ENCODE measurements at regions of chr14 and their contacts with region 1.

Region 1: DNA sequence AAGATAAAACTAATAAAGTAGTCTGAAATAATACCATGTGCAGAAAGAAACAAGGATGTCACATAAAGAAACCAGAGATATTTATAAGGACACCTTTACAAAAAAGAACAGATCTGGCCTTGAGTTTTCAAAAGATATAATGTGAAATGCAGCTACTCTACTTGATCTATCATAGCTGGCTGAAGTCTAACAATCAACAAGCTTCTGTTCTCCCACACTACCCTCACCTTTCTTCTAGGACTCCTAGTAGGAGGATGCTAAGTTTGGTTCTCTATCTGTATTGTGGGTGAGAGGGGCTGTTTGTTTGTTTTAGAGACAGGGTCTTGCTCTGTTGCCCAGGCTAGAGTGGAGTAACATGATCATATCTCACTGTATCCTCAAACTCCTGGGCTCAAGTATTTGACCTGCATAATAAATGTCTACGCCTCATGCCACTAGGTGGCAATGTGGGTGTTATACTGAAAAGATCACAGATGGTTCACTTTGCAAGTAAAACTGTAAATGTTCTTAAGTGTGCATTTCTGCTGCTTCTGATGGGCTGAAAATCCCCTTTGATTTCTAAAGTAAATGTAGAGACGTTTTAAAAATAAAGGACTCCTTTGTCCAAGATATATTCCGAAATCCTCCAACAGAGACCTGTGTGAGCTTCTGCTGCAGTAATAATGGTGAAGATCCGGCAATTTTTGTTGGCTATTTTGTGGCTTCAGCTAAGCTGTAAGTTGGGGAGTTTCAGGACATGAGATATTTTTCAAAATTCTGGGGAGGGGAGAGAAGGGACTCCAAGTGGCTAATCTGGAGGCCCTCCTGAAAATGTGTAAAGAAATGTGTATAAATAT is 269.3 kb downstream of the DAD1 start:
- DNase-seq: peak; percentile 71
- H3K4me3 Mint-ChIP-seq: no peak overlapping the region
- H3K27ac Mint-ChIP-seq: no peak overlapping the region
- H3K4me1 Mint-ChIP-seq: peaks cover 12% of the 10 kb centered on the region
- H3K27me3 Mint-ChIP-seq: no peaks in the 10 kb centered on the region
- CTCF ChIP-seq: peak; percentile 35

Region 2: DNA sequence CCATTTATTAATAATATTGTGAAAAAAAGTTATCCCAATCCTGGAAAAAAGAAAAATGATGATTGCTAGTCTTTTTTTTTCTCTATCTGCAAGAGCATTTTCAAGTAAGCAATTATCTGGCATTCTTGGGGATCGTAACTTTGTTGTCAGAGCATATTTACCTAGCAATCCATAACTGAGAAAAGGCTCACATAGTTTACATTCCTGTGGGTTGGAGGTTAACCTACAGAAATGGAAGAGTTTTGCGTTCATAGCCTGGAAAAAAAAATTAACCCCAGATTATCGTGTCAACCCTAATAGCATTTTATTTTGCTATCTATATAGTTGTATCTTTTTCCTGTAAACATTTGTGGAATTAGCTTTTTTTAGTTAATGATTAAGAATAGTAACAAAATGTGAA is 23.0 kb before region 1 on chr14:
- CTCF ChIA-PET with region 1: no interaction called
- intact Hi-C with region 1: no loop called
- DNase-seq: peak; percentile 42
- H3K4me3 Mint-ChIP-seq: no peak overlapping the region
- H3K27ac Mint-ChIP-seq: no peak overlapping the region
- H3K4me1 Mint-ChIP-seq: peaks cover 23% of the 10 kb centered on the region
- H3K27me3 Mint-ChIP-seq: peaks cover 14% of the 10 kb centered on the region
- CTCF ChIP-seq: no peak

Region 3: GRCh38 chr14:22337521-22337920 is 17.8 kb after region 1 on chr14:
- CTCF ChIA-PET with region 1: interaction called, 10 read pairs
- intact Hi-C with region 1: no loop called
- DNase-seq: no peak
- H3K4me3 Mint-ChIP-seq: no peak overlapping the region
- H3K27ac Mint-ChIP-seq: no peak overlapping the region
- H3K4me1 Mint-ChIP-seq: peaks cover 25% of the 10 kb centered on the region
- H3K27me3 Mint-ChIP-seq: no peaks in the 10 kb centered on the region
- CTCF ChIP-seq: no peak

Region 4: GRCh38 chr14:22375321-22375930 is 55.7 kb after region 1 on chr14:
- CTCF ChIA-PET with region 1: interaction called, 73 read pairs
- intact Hi-C with region 1: loop called (anchors 1 kb)
- DNase-seq: peak; percentile 50
- H3K4me3 Mint-ChIP-seq: no peak overlapping the region
- H3K27ac Mint-ChIP-seq: no peak overlapping the region
- H3K4me1 Mint-ChIP-seq: no peaks in the 10 kb centered on the region
- H3K27me3 Mint-ChIP-seq: no peaks in the 10 kb centered on the region
- CTCF ChIP-seq: no peak

Region 5: GRCh38 chr14:22380571-22381407 is 61.0 kb after region 1 on chr14:
- CTCF ChIA-PET with region 1: interaction called, 73 read pairs
- intact Hi-C with region 1: loop called (anchors 1 kb)
- DNase-seq: no peak
- H3K4me3 Mint-ChIP-seq: peak overlapping the region; percentile 36
- H3K27ac Mint-ChIP-seq: no peak overlapping the region
- H3K4me1 Mint-ChIP-seq: peaks cover 34% of the 10 kb centered on the region
- H3K27me3 Mint-ChIP-seq: no peaks in the 10 kb centered on the region
- CTCF ChIP-seq: no peak